Heart right ventricle (tissue), 16 donors: ENCODE measurements at regions of chr7 and their contacts with region 1.

Region 1: GRCh38 chr7:78845155-78845554 is 608.3 kb downstream of the MAGI2 start:
- DNase-seq: no peak
- ATAC-seq: no peak
- H3K4me3 ChIP-seq: no peak overlapping the region
- H3K27ac ChIP-seq: no peak overlapping the region
- H3K4me1 ChIP-seq: peaks cover 0 to 5% (median 0%) of the 10 kb centered on the region in 9 donors
- H3K27me3 ChIP-seq: no peaks in the 10 kb centered on the region
- CTCF ChIP-seq: no peak

Region 2: GRCh38 chr7:79142706-79143105 is 297.6 kb after region 1 on chr7:
- intact Hi-C with region 1: loop called in 1 of 10 experiments (anchors 5 kb)
- DNase-seq: no peak
- ATAC-seq: no peak
- H3K4me3 ChIP-seq: no peak overlapping the region
- H3K27ac ChIP-seq: no peak overlapping the region
- H3K4me1 ChIP-seq: peaks cover 0 to 14% (median 6%) of the 10 kb centered on the region in 9 donors
- H3K27me3 ChIP-seq: no peaks in the 10 kb centered on the region
- CTCF ChIP-seq: no peak